PC-9 (cell line): ENCODE measurements at regions of chr21 and their contacts with region 1.

Region 1: DNA sequence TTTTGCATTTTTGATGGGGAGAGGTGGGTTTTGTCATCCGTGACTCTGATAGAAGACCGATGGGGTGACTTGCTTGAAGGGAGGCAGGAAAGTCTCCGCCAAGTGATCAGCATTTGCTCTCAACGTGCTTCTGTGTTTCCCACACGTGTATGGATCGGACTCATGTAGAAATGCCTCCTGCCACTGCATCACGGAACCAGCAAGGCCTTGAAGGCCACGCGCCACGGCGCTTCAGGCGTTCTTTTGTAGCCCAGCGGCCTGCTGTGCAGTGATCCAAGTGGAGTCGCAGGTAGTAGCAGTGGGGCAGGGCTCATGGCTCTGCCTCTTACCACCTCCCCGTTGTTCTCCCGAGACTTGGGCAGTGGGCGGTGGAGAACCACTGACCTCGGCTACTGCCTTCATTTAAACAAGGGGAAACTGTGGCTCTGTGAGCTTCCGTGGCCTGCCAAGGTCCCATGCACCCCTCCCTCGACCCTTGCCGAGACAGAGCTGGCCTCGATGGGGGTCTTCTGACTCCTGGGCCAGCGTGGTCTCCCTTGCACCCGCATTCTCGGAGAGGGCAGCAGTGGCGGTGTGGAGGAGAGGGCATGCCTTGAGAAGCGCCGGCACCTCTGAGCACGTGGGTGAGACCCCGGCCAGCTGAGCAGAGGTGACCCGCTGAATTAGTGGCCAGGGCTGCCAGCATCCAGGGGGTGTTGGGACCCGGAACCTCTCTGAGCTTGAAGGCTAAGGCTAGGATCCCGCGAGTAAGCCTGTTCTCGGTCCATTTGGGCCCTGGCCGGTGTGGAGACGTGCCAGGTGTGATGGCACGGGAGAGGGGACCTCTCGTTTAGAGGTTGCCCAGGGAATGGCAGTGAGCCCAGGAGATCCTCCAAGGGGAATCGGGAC is 46.1 kb upstream of the ABCG1 start:
- DNase-seq: no peak
- H3K4me3 ChIP-seq: no peak overlapping the region
- H3K27ac ChIP-seq: no peak overlapping the region
- H3K4me1 ChIP-seq: no peaks in the 10 kb centered on the region
- H3K27me3 ChIP-seq: no peaks in the 10 kb centered on the region
- CTCF ChIP-seq: no peak

Region 2: DNA sequence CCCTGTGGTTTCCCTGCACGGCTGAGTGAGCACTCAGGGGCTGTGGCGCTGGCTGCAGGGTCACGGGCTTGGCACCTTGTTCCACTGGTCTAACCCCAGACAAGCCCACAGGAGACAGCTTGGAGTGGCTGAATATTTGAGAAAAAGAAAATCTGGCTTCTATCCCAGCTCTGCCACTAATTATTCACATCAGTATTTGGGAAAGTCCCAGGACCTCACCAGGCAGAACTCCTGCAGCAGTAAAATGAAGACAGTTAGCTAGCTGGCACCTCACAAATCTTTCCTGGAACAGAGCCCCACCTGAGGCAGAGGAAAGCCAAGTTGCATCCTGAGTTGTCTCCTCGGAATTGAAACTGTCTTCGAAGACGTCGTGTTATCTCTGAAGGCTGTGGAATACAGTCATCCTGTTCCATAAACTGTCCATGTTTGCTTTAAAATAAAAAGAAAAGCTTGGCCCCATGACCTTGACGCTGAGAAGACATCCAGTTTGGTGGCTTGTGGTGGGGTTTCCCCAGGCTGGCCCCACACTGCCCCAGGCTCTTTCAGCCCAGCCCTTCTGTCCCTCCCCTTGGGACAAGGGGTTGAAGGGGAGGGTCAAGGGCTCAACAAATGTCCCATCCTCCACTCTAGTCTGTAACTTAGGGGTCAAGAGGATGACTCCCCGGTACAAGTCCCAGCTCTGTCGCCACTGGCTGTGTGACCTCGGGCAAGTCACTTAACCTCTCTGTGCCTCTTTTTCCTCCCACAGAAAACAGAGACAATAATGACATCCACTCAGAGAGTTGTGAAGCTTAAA is 571.1 kb before region 1 on chr21:
- CTCF ChIA-PET with region 1: interaction called, 14 read pairs
- POLR2A ChIA-PET with region 1: no interaction called
- intact Hi-C with region 1: no loop called
- DNase-seq: no peak
- H3K4me3 ChIP-seq: no peak overlapping the region
- H3K27ac ChIP-seq: no peak overlapping the region
- H3K4me1 ChIP-seq: peaks cover 19% of the 10 kb centered on the region
- H3K27me3 ChIP-seq: no peaks in the 10 kb centered on the region
- CTCF ChIP-seq: no peak

Region 3: DNA sequence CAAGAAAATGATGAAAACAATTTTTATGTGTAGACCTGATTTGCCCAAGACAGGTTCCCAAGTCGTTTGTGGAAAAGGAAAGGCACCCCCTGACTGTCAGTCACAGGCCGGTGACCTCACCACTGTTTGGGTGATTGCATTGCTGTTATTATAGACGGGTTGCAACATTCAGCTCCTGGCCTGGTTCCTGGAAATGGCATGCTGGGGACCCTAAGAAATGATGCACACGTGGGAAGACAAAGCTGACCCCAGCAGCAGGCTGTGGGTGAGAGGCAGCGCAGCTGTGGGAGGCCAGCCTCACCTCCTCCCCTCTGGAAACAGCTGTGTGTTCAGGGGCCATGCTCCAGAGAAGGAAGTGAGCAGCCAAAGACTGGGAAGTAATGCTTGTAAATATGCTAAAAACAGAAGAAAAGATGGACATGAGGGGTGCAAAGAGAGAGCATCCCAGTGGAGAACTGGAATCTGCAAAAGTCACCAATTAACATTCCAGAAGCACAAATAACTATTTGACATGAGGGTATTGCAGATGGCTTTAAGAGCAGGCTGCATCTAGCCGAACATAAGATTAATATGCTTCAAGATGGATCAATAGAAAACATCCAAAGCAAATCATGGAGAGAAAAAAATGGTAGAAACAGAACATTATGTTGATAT is 22.7 kb after region 1 on chr21:
- CTCF ChIA-PET with region 1: no interaction called
- POLR2A ChIA-PET with region 1: no interaction called
- intact Hi-C with region 1: no loop called
- DNase-seq: no peak
- H3K4me3 ChIP-seq: no peak overlapping the region
- H3K27ac ChIP-seq: no peak overlapping the region; the same call in 1 of the 2 replicates
- H3K4me1 ChIP-seq: peaks cover 56% of the 10 kb centered on the region
- H3K27me3 ChIP-seq: no peaks in the 10 kb centered on the region
- CTCF ChIP-seq: no peak

Region 4: DNA sequence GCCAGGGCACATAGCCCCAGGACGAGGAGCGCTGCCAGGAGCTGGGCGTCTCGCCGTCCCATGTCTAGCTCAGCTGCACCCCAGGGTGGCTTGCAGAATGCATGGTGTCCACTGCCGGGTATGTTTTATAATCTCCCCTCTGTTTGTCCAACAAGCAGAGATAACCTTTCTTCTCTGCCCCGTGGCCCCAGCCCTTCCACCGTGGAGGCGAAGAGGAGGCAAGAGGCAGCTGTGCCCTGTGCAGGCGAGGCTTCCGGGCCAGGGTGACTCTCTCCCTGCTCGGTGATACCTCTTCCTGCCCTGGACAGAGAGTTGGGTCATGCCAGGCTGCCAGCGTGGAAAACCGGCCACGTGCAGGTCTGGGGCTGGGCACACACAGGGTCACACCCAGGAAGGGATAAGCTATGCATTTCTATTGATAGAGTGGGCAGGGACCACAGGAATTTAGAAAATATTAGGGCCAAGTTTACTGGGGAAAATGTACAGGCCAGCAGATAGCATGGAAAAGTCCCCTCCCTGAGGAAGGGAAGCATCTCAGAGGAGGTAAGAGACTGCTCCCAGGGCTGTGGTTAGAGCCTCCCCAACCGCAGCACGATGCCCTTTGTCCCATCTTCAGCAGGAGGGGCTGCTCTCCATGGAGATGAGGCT is 178.2 kb after region 1 on chr21 and contains the start of gene TFF2:
- CTCF ChIA-PET with region 1: no interaction called
- POLR2A ChIA-PET with region 1: no interaction called
- intact Hi-C with region 1: no loop called
- DNase-seq: peak; percentile 49 to 67
- H3K4me3 ChIP-seq: no peak within 1 kb of the TSS
- H3K27ac ChIP-seq: peak within 1 kb of the TSS; percentile 53
- H3K4me1 ChIP-seq: peaks cover 10% of the 10 kb centered on the region; the same call in 1 of the 2 replicates
- H3K27me3 ChIP-seq: no peaks in the 10 kb centered on the region
- CTCF ChIP-seq: no peak
- total RNA-seq, gene TFF2: 0.52 TPM in 1 of 2 replicates, not detected in the other

Region 5: DNA sequence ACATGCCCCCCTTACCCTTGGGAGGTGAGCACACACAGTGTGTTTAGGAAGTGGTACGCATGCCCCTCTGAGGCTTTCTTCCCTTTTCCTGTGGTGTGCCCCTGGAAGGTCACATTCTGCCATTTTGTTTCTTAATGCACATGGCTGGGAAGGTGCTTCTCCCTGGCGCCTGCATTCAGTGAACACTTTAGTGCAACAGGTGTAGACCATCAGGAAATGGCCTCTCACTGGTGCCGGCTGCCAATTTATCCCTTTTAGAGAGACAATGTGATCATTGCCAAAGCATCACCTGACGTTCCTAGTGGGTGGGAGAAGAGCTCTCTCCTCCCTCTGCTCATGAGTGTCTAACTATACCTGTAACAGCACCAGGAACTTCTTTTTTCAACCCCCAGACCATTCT is 428.8 kb after region 1 on chr21:
- CTCF ChIA-PET with region 1: no interaction called
- POLR2A ChIA-PET with region 1: no interaction called
- intact Hi-C with region 1: no loop called
- DNase-seq: no peak
- H3K4me3 ChIP-seq: no peak overlapping the region
- H3K27ac ChIP-seq: no peak overlapping the region
- H3K4me1 ChIP-seq: no peaks in the 10 kb centered on the region
- H3K27me3 ChIP-seq: 0 out of 2 replicates have a peak, but pooled peaks cover 2% of the 10 kb centered on the region
- CTCF ChIP-seq: no peak

Region 6: GRCh38 chr21:42931576-42932258 is 758.9 kb after region 1 on chr21:
- CTCF ChIA-PET with region 1: no interaction called
- POLR2A ChIA-PET with region 1: no interaction called
- intact Hi-C with region 1: no loop called
- DNase-seq: no peak
- H3K4me3 ChIP-seq: no peak overlapping the region
- H3K27ac ChIP-seq: no peak overlapping the region
- H3K4me1 ChIP-seq: no peaks in the 10 kb centered on the region
- H3K27me3 ChIP-seq: no peaks in the 10 kb centered on the region
- CTCF ChIP-seq: no peak